ENCODE measurements at regions of chr6 and their contacts with region 1.

Region 1: GRCh38 chr6:30883685-30884520 is at the start of gene DDR1:
- DNase-seq: peak; percentile 83 to 87
- H3K4me3 ChIP-seq: peak within 1 kb of the TSS; percentile 1 to 78 (median 57)
- H3K27ac ChIP-seq: peak within 1 kb of the TSS; percentile 91 to 98 (median 96)
- H3K4me1 ChIP-seq: peaks cover 34 to 56% of the 10 kb centered on the region in 2 donors
- H3K27me3 ChIP-seq: no peaks in the 10 kb centered on the region
- CTCF ChIP-seq: no peak
- POLR2A ChIP-seq: peak in 1 of 2 donors; percentile 42
- total RNA-seq, gene DDR1: 93.4 to 207 (median 131) TPM

Region 2: DNA sequence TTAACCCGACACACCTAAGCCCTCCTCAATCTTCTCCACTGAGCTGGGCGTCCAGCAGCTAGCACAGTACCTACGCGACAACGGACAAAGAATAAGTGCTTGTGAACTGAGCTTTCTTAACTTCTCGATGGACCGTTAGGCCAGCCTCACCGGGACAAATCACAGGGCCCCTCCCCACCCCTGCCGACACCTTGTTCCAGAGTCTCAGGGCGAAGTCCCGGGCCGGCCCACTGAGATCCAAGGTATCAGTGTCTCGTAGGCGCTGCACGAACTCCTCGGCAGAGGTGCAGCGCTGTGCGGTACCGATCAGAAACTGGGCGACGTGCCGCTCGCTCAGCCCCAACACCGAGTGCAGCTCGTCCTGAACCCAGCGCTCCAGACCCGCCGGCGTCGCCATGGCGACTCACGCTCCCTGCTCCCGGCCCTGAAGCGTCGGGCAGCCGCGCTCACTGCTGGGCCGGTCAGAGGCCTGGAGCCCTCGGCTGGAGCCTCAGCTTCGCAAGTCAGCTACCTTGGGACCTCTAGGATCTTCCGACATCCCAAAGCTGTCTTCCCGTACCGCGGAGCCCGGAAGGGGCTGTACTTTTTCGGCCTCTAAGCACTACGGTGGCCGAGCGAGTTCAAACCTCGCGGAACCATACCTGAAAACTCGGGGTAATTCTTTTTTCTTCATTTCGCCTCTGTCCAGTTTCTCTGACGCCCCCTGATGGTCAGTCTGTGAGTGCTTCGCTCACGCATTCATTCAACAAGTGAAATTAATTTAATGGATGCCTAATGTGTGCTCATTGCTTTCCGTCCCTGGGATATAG is 211.3 kb before region 1 on chr6 and contains the start of gene DHX16:
- intact Hi-C with region 1: loop called (anchors 10 kb)
- DNase-seq: peak; percentile 96 to 97
- H3K4me3 ChIP-seq: peak within 1 kb of the TSS; percentile 43 to 98 (median 80)
- H3K27ac ChIP-seq: peak within 1 kb of the TSS in 2 of 3 donors; percentile 14 to 53
- H3K4me1 ChIP-seq: peaks cover 9 to 28% of the 10 kb centered on the region in 2 donors
- H3K27me3 ChIP-seq: no peaks in the 10 kb centered on the region
- CTCF ChIP-seq: peak; percentile 59 to 87 (median 78)
- POLR2A ChIP-seq: peak in 1 of 2 donors; percentile 49
- total RNA-seq, gene DHX16: 25.6 to 38.8 (median 28.2) TPM

Region 3: DNA sequence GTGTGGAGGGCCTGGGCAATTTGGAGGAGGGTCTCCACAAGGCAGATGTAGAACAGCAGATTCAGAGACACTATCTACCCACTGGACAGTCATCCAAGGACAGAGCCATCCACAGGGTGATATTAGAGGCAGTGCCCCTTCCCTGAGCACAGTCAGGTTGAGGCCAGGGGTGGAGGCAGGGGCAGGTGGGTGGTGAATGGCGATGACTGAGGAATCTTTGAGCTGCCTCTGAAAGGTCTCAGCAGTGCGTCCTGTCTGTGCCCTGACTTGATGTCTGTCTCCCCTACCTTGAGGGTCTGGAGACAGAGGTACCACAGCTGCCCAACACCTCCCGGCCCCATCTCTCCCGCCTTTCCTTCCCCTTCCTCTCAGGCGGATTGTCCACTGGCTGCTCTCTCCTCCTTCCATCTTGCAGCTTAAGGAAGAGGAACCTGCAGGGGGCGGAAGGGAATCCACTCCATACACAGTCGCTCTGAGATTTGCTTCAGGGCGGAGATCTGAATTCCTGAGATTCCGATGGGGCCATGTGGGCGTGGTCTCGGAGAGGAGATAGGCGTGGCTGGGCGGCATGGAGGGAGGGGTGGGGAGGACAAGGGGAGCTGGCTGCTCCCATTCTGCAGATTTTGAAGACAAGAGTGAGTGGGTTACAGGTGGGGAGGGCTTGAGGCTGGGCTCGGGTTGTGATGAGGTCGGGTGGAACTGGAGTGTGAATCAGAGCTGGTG is 58.6 kb after region 1 on chr6:
- intact Hi-C with region 1: no loop called
- DNase-seq: peak; percentile 81 to 93
- H3K4me3 ChIP-seq: no peak overlapping the region
- H3K27ac ChIP-seq: no peak overlapping the region
- H3K4me1 ChIP-seq: peaks cover 8 to 12% of the 10 kb centered on the region in 2 donors
- H3K27me3 ChIP-seq: no peaks in the 10 kb centered on the region
- CTCF ChIP-seq: peak in 4 of 6 experiments; percentile 55 to 78 (median 60)
- POLR2A ChIP-seq: peak in 1 of 2 donors; percentile 16

Measured in thyroid gland (tissue), 4 donors.